Activated CD4-positive, alpha-beta memory T cell treated with anti-CD3 and anti-CD28 coated beads, Interleukin-2, amount 10 ng/mL, durations not matched to agents 7 days and 5 days (primary cell): ENCODE measurements at regions of chr2 and their contacts with region 1.

Region 1: GRCh38 chr2:30239308-30239985 is 8.1 kb downstream of the LBH start:
- DNase-seq: peak; percentile 74
- H3K4me3 Mint-ChIP-seq: peak overlapping the region; percentile 3
- H3K27ac Mint-ChIP-seq: no peak overlapping the region
- H3K4me1 Mint-ChIP-seq: peaks cover 76% of the 10 kb centered on the region
- H3K27me3 Mint-ChIP-seq: no peaks in the 10 kb centered on the region

Region 2: GRCh38 chr2:30225131-30225762 is 14.2 kb before region 1 on chr2:
- CTCF ChIA-PET with region 1: interaction called, 11 read pairs
- POLR2A ChIA-PET with region 1: interaction called, 36 read pairs
- DNase-seq: peak; percentile 59
- H3K4me3 Mint-ChIP-seq: peak overlapping the region; percentile 95
- H3K27ac Mint-ChIP-seq: peak overlapping the region; percentile 93
- H3K4me1 Mint-ChIP-seq: peaks cover 59% of the 10 kb centered on the region
- H3K27me3 Mint-ChIP-seq: peaks cover 5% of the 10 kb centered on the region

Region 3: GRCh38 chr2:30252723-30253701 is 13.6 kb after region 1 on chr2:
- CTCF ChIA-PET with region 1: interaction called, 18 read pairs
- POLR2A ChIA-PET with region 1: interaction called, 41 read pairs
- DNase-seq: peak; percentile 65
- H3K4me3 Mint-ChIP-seq: peak overlapping the region; percentile 4
- H3K27ac Mint-ChIP-seq: peak overlapping the region; percentile 69
- H3K4me1 Mint-ChIP-seq: peaks cover 72% of the 10 kb centered on the region
- H3K27me3 Mint-ChIP-seq: no peaks in the 10 kb centered on the region

Region 4: DNA sequence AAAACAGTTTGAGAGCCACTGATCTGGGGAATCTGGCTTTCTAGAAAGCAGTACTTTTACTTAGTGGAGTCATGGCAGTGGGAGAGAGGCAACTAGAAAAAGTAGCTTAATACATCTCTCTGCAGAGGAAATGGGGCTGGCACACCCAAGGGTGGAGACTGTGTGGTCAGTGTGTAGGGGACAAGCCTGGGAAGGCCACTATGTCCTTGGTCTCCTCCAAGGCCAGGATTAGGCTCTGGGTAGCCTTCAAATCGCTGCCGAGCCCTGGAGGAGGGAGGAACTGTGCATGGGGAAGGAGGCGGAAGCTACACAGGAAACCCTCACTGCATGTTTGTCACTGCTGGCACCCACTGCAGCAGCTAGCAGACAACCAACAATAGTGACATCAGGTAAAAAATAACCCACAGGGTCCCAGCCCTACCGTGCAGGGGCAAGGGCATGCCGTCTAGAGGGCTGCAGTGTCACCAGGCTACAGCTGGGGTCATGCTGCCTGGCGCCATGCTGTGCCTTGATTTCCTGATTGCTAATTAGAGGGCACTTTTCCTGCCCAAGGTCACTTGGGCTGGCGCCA is 26.7 kb after region 1 on chr2:
- CTCF ChIA-PET with region 1: interaction called, 16 read pairs
- POLR2A ChIA-PET with region 1: interaction called, 138 read pairs
- DNase-seq: peak; percentile 74
- H3K4me3 Mint-ChIP-seq: peak overlapping the region; percentile 75
- H3K27ac Mint-ChIP-seq: peak overlapping the region; percentile 92
- H3K4me1 Mint-ChIP-seq: peaks cover 64% of the 10 kb centered on the region
- H3K27me3 Mint-ChIP-seq: no peaks in the 10 kb centered on the region

Region 5: DNA sequence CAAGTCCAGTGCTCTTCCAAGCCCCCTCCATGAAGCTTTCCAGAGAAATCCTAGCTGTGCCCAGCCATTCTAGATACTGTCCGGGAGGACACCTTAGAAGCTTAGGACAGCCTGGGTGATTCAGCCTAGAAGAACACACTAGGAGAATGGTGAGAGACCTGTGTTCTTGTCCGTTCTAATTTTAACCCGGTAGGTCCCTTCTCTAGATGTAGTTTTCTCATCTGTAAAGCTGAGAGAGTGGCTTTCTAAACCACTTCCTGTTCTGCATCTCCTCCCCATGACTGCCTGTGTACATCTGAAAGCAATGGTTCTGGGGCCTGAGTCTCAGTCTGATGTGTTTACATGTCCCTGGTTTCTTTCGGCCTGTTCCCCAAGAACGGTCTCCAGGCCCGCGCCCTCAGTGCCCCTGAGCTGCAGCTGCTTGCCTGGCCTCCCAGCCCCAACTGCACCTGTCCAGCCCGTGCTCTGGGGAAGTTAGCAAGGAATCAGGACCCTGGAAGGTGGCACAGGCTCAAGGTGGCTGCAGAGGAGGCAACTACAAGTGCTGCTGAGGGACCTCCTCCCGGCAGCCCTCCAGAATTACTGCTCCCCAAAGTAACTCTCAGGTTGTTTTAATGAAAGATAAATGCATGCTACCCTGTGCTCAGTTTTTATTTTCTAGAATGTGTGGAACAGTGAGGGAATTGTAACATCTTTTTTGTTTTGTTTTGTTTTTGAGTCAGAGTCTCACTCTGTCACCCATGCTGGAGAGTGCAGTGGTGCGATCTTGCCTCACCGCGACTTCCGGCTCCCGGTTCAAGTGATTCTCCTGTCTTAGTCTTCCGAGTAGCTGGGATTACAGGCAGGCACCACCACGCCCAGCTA is 97.8 kb after region 1 on chr2:
- CTCF ChIA-PET with region 1: interaction called, 7 read pairs
- POLR2A ChIA-PET with region 1: interaction called, 80 read pairs
- DNase-seq: peak; percentile 75
- H3K4me3 Mint-ChIP-seq: peak overlapping the region; percentile 72
- H3K27ac Mint-ChIP-seq: peak overlapping the region; percentile 98
- H3K4me1 Mint-ChIP-seq: peaks cover 65% of the 10 kb centered on the region
- H3K27me3 Mint-ChIP-seq: no peaks in the 10 kb centered on the region